ENCODE measurements at regions of chr12 and their contacts with region 1.

Region 1: DNA sequence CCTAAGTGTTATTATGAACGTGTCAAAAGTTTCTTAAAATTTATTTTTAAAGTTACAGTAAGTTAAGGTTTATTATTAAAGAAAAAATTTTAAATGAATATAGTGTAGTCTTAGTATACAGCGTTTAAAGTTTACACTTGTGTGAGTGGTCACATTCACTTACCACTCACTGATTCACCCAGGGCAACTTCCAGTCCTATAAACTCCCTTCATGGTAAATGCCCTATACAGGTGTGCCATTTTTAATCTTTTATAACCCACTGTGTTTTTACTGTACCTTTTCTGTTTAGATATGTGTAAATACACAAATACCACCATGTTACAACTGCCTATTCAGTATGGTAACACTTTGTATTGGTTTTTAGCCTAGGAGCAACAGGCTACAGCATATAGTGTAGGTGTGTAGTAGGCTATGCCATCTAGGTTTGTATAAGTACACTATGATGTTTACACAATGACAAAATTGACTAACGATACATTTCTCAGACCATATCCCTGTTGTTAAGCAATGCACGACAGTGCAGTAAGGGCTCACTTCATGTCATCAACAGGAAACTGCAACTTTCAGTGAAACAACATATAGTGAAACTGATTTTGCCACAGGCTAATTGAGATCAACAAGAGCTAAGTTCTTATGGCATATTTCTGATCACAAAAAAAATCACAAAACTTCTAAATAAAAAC is 112.0 kb upstream of the TMCC3 start:
- DNase-seq: no peak
- ATAC-seq: no peak
- H3K4me3 ChIP-seq: no peak overlapping the region
- H3K27ac ChIP-seq: no peak overlapping the region
- H3K4me1 ChIP-seq: no peaks in the 10 kb centered on the region
- H3K27me3 ChIP-seq: peaks cover 0 to 6% (median 0%) of the 10 kb centered on the region in 7 donors
- CTCF ChIP-seq: no peak

Region 2: DNA sequence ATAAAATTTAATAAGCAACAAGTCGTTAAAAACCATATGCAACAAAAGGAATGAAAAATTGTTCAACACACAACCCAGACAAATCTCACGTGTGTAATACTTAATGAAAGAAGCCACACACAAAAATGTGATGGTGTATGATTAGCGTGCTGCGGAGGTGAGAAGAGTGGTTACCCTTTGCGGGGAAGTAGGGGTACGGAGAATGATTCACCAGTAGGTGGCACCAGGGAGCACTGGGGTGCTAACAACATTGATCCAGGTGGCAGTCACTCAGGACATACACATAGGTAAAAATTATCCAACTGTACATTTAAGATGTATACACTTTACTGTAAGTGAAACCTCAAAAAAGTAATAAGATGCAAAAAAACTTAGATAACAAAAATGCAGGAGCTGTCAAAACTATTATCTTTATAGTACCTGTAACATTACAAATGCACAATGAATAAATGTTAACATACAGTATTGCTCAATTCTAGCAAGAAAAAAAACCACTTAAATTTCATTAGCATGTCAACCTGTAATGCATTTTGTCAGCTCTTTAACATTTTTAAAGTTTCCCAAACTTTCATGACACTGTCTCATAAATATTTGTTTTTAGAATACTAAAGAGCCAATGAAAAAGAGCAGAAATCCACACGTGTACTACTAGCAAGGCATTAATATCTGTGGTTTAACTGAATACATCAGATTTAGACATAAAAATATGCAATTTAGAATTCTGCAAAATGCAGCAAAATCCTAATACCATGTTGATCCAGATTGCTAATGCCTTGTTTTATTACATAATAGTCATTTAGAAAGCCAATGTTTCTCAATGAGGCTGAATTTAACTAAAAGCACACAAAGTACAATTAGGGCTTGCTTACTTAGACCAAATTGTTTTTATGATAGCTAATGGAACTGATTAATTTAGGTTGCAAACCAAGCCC is 158.7 kb before region 1 on chr12:
- intact Hi-C with region 1: loop called in 3 of 10 experiments (anchors 10 kb)
- DNase-seq: peak in 1 of 2 donors; percentile 39
- ATAC-seq: peak in 1 of 8 donors; percentile 42
- H3K4me3 ChIP-seq: no peak overlapping the region
- H3K27ac ChIP-seq: no peak overlapping the region
- H3K4me1 ChIP-seq: peaks cover 0 to 4% (median 0%) of the 10 kb centered on the region in 9 donors
- H3K27me3 ChIP-seq: no peaks in the 10 kb centered on the region
- CTCF ChIP-seq: peak; percentile 16 to 74 (median 66)

Region 3: DNA sequence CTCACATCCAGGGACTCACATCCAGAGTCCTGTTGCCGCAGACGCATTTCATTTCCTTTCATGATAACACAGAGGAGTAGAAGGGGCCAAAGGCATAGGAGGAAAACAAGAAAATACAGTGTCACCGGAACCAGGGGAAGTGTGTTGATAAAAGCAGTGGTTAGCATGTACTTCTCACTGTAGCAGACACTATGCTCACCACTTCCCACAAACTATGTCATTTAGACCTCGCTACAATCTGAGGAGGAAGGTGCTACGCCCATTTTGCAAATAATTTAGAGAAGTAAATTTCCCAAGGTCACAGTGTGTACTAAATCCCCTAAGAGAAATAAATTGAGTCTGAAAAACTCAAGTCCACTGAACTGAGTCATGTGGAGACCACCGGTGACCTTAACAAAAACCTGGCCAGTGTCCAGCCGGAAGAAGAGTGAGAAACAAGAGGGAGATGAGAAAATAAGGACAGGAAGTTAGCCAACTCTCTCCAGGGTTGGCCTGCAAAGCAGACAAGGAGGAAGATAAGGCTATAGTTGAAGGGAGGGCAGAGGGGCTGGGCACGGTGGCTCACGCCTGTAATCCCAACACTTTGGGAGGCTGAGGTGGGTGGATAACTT is 86.3 kb before region 1 on chr12:
- intact Hi-C with region 1: loop called in 1 of 10 experiments (anchors 10 kb)
- DNase-seq: peak in 1 of 2 donors; percentile 9
- ATAC-seq: peak; percentile 59 to 81 (median 70)
- H3K4me3 ChIP-seq: no peak overlapping the region
- H3K27ac ChIP-seq: peak overlapping the region in 6 of 10 donors; percentile 4 to 88 (median 32)
- H3K4me1 ChIP-seq: peaks cover 0 to 49% (median 19%) of the 10 kb centered on the region in 9 donors
- H3K27me3 ChIP-seq: no peaks in the 10 kb centered on the region
- CTCF ChIP-seq: no peak

Region 4: GRCh38 chr12:96047229-96048211 is 1285.1 kb after region 1 on chr12:
- intact Hi-C with region 1: no loop called
- DNase-seq: no peak
- ATAC-seq: peak in 7 of 8 donors; percentile 38 to 74 (median 41)
- H3K4me3 ChIP-seq: no peak overlapping the region
- H3K27ac ChIP-seq: peak overlapping the region in 1 of 10 donors; percentile 80
- H3K4me1 ChIP-seq: peaks cover 0 to 71% (median 15%) of the 10 kb centered on the region in 9 donors
- H3K27me3 ChIP-seq: no peaks in the 10 kb centered on the region
- CTCF ChIP-seq: no peak